Activated CD4-positive, alpha-beta memory T cell treated with anti-CD3 and anti-CD28 coated beads for 36 hours (primary cell): ENCODE measurements at regions of chr5 and their contacts with region 1.

Region 1: GRCh38 chr5:161333194-161333880 is 213.2 kb downstream of the GABRB2 start:
- DNase-seq: no peak
- H3K4me3 Mint-ChIP-seq: no peak overlapping the region
- H3K27ac Mint-ChIP-seq: no peak overlapping the region
- H3K4me1 Mint-ChIP-seq: no peaks in the 10 kb centered on the region
- H3K27me3 Mint-ChIP-seq: no peaks in the 10 kb centered on the region

Region 2: DNA sequence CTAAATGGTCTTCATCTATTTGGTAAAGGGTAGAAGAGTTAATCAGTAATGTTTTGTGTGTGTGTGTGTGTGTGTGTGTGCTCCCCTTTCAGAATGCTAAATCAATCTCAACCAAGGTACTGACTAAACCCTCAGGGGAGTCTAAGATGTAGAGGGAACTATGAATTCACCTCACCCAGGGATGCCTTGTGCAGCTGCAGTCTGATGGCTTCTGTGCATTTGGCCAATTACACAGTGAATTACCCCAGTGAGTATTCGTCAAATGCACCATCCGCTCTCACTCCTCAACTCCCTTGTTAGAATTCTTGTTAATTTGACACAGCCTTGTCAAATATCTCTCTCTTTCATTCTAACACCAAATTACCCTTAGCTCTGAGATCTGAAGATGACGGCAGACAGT is 21.4 kb before region 1 on chr5:
- CTCF ChIA-PET with region 1: no interaction called
- POLR2A ChIA-PET with region 1: no interaction called
- intact Hi-C with region 1: loop called (anchors 2 kb)
- DNase-seq: no peak
- H3K4me3 Mint-ChIP-seq: no peak overlapping the region
- H3K27ac Mint-ChIP-seq: no peak overlapping the region
- H3K4me1 Mint-ChIP-seq: no peaks in the 10 kb centered on the region
- H3K27me3 Mint-ChIP-seq: no peaks in the 10 kb centered on the region